Naive thymus-derived CD4-positive, alpha-beta T cell (primary cell): ENCODE measurements at regions of chr12 and their contacts with region 1.

Region 1: DNA sequence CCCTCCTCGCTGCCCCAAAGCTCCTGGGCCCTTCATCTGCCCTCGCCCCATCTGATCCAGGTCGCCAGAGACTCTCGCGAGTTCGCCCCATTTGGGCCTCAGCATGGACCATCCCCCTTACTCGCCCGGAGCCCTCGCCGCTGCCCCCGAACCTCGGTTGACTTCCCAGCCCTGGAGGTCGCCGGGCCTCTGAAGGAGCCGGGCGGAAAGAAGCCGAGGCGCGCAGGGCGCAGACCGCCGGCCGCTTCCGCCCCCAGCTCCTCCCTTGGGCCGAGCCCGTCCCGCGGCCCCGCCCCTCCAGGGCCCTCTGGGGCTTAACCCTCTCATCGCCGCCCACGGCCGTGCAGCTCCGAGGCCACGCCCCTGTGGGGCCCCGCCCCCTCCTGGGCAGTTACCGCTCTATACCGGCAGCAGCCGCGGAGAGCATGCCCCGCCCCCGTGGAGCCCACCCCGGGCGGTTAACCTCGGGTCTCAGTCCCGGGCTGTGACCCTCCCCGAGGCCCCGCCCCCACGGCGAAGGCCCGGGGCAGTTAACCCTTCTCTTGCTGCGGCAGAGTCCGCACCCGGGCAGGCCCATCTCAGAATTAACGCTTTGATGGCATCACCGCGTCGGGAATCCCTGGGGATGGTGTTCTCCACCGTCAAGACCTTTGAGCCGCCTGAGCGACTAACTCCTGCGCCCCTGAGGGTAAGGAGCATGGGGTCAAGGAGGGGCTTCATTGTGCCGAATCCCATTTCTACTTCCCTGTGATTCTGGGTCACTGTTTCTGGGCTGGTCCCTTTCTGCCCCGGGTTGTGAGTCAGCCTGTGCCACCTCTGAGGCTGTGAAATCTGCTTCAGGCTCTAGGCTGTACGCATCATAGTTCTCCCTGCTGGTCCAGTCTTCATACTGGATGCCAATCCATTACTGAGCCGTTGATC is at the start of gene SPSB2:
- DNase-seq: peak; percentile 96 to 100 (median 98)
- ATAC-seq: peak; percentile 97
- H3K4me3 ChIP-seq: peak within 1 kb of the TSS; percentile 98
- H3K4me3 Mint-ChIP-seq: peak within 1 kb of the TSS; percentile 87 to 95 (median 91)
- H3K27ac ChIP-seq: peak within 1 kb of the TSS; percentile 77
- H3K27ac Mint-ChIP-seq: peak within 1 kb of the TSS; percentile 79 to 94 (median 88)
- H3K4me1 ChIP-seq: peaks cover 32 to 34% of the 10 kb centered on the region in 2 donors
- H3K4me1 Mint-ChIP-seq: peaks cover 34 to 58% (median 47%) of the 10 kb centered on the region in 7 donors
- H3K27me3 ChIP-seq: no peaks in the 10 kb centered on the region
- H3K27me3 Mint-ChIP-seq: no peaks in the 10 kb centered on the region
- total RNA-seq, gene SPSB2: 5.1 to 20.2 (median 11.2) TPM

Region 2: GRCh38 chr12:6662906-6663742 is 210.2 kb before region 1 on chr12 and contains the start of gene ING4:
- CTCF ChIA-PET with region 1: interaction called, 3 read pairs
- POLR2A ChIA-PET with region 1: no interaction called
- intact Hi-C with region 1: loop called in 1 of 2 experiments (anchors 1 kb)
- DNase-seq: peak; percentile 79 to 99 (median 98)
- ATAC-seq: peak; percentile 99
- H3K4me3 ChIP-seq: peak within 1 kb of the TSS; percentile 92
- H3K4me3 Mint-ChIP-seq: peak within 1 kb of the TSS; percentile 92 to 99 (median 96)
- H3K27ac ChIP-seq: peak within 1 kb of the TSS; percentile 80
- H3K27ac Mint-ChIP-seq: peak within 1 kb of the TSS; percentile 91 to 99 (median 96)
- H3K4me1 ChIP-seq: peaks cover 15 to 16% of the 10 kb centered on the region in 2 donors
- H3K4me1 Mint-ChIP-seq: peaks cover 18 to 47% (median 36%) of the 10 kb centered on the region in 7 donors
- H3K27me3 ChIP-seq: no peaks in the 10 kb centered on the region
- H3K27me3 Mint-ChIP-seq: peaks cover 0 to 2% (median 0%) of the 10 kb centered on the region in 5 donors
- total RNA-seq, gene ING4: 33.1 to 101 (median 39.6) TPM

Region 3: DNA sequence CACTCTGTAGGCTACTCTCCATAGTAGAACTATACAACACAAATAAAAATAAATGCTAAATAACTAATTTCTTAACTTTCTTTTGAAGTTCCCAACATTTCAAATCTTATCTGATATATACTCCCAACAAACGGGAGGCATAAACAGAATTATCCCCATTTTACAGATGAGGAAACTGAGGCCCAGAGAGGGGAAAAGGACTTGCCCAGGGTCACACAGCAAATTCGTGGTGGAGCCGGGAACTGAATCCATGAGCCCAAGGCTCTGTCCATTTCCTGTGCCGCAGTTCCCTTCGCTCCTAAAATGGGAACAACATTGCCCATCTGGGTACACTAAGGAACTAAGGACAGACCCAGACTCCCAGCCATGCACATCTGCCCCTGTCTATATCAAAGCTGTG is 196.4 kb before region 1 on chr12:
- CTCF ChIA-PET with region 1: no interaction called
- POLR2A ChIA-PET with region 1: no interaction called
- intact Hi-C with region 1: no loop called
- DNase-seq: no peak
- ATAC-seq: no peak
- H3K4me3 ChIP-seq: no peak overlapping the region
- H3K4me3 Mint-ChIP-seq: no peak overlapping the region
- H3K27ac ChIP-seq: no peak overlapping the region
- H3K27ac Mint-ChIP-seq: no peak overlapping the region
- H3K4me1 ChIP-seq: no peaks in the 10 kb centered on the region
- H3K4me1 Mint-ChIP-seq: peaks cover 0 to 14% (median 5%) of the 10 kb centered on the region in 7 donors
- H3K27me3 ChIP-seq: no peaks in the 10 kb centered on the region
- H3K27me3 Mint-ChIP-seq: no peaks in the 10 kb centered on the region

Region 4: DNA sequence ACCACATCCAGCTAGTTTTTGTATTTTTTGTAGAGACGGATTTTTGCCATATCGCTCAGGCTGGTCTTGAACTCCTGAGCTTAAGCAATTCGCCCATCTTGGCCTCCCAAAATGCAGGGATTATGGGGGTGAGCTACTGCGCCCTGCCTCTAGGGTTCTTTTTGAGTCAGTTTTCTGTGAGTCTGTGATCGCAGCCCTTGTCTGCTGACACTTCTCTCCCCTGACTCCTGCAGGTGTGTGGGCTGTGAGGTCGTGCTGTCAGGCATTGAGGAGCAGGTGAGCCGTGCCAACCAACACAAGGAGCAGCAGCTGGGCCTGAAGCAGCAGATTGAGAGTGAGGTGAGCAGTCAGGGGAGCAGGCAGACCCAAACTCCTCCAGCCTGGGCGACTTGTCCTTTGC is 143.2 kb before region 1 on chr12:
- CTCF ChIA-PET with region 1: no interaction called
- POLR2A ChIA-PET with region 1: no interaction called
- intact Hi-C with region 1: no loop called
- DNase-seq: no peak
- ATAC-seq: no peak
- H3K4me3 ChIP-seq: no peak overlapping the region
- H3K4me3 Mint-ChIP-seq: no peak overlapping the region
- H3K27ac ChIP-seq: no peak overlapping the region
- H3K27ac Mint-ChIP-seq: no peak overlapping the region
- H3K4me1 ChIP-seq: peaks cover 1 to 3% of the 10 kb centered on the region in 2 donors
- H3K4me1 Mint-ChIP-seq: peaks cover 11 to 16% (median 13%) of the 10 kb centered on the region in 7 donors
- H3K27me3 ChIP-seq: no peaks in the 10 kb centered on the region
- H3K27me3 Mint-ChIP-seq: no peaks in the 10 kb centered on the region

Region 5: DNA sequence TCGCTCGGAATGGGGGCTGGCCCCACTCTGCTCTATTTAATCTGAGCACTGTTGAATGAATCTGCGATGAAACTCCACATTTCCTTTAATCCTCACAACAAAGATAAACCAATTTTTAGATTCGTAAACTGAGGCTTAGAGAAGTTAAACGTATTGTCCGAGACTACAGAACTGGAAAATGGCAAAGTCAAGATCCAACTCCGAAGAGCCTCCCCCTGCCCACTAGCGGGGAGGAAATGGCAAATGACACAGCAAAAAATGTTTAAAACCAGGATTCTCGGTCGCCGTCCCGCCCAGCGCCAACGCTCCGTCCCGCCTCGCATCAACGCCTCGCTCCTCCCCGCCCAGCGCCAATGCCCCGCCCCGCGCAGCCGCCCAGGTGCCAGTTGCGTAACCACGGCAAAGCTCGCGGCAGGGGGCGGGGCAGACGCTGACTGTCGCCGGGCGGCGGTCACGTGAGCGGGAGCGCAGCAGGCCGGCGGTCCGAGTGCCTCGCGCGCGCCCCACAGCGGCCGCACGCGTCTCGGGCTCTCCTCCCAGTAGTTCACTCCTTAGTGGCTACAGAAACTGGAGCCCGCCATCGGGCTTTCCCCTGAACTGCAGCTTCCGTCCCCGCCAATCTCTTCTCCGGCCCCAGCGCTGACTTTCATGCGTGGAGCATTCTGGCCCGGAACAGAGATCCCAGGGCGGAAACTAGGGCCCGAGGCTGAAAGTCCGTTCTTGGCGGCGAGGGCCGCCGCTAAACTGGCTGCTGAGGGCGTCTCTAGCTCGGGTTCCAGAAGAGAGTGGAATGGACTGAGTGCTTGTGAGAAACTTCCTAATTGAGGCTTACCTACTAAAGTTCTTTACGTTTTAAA is 17.7 kb after region 1 on chr12:
- CTCF ChIA-PET with region 1: interaction called, 21 read pairs
- POLR2A ChIA-PET with region 1: interaction called, 70 read pairs
- intact Hi-C with region 1: loop called (anchors 1 kb)
- DNase-seq: peak; percentile 95 to 100 (median 97)
- ATAC-seq: peak; percentile 96
- H3K4me3 ChIP-seq: peak overlapping the region; percentile 93
- H3K4me3 Mint-ChIP-seq: peak overlapping the region; percentile 78 to 86 (median 84)
- H3K27ac ChIP-seq: peak overlapping the region; percentile 86
- H3K27ac Mint-ChIP-seq: peak overlapping the region; percentile 82 to 94 (median 90)
- H3K4me1 ChIP-seq: peaks cover 6 to 10% of the 10 kb centered on the region in 2 donors
- H3K4me1 Mint-ChIP-seq: peaks cover 0 to 31% (median 11%) of the 10 kb centered on the region in 7 donors
- H3K27me3 ChIP-seq: no peaks in the 10 kb centered on the region
- H3K27me3 Mint-ChIP-seq: no peaks in the 10 kb centered on the region

Region 6: GRCh38 chr12:6927379-6928024 is 54.1 kb after region 1 on chr12 and contains the start of gene ATN1:
- CTCF ChIA-PET with region 1: interaction called, 15 read pairs
- POLR2A ChIA-PET with region 1: interaction called, 5 read pairs
- intact Hi-C with region 1: loop called (anchors 1 to 2 kb)
- DNase-seq: peak in 5 of 9 donors; percentile 41 to 66 (median 43)
- ATAC-seq: peak; percentile 35
- H3K4me3 ChIP-seq: peak within 1 kb of the TSS; percentile 64
- H3K4me3 Mint-ChIP-seq: peak within 1 kb of the TSS; percentile 85 to 99 (median 92)
- H3K27ac ChIP-seq: peak within 1 kb of the TSS; percentile 86
- H3K27ac Mint-ChIP-seq: peak within 1 kb of the TSS; percentile 88 to 98 (median 95)
- H3K4me1 ChIP-seq: peaks cover 16 to 37% of the 10 kb centered on the region in 2 donors
- H3K4me1 Mint-ChIP-seq: peaks cover 38 to 69% (median 56%) of the 10 kb centered on the region in 7 donors
- H3K27me3 ChIP-seq: no peaks in the 10 kb centered on the region
- H3K27me3 Mint-ChIP-seq: no peaks in the 10 kb centered on the region
- total RNA-seq, gene ATN1: 29.5 to 42.2 (median 34.4) TPM

Region 7: DNA sequence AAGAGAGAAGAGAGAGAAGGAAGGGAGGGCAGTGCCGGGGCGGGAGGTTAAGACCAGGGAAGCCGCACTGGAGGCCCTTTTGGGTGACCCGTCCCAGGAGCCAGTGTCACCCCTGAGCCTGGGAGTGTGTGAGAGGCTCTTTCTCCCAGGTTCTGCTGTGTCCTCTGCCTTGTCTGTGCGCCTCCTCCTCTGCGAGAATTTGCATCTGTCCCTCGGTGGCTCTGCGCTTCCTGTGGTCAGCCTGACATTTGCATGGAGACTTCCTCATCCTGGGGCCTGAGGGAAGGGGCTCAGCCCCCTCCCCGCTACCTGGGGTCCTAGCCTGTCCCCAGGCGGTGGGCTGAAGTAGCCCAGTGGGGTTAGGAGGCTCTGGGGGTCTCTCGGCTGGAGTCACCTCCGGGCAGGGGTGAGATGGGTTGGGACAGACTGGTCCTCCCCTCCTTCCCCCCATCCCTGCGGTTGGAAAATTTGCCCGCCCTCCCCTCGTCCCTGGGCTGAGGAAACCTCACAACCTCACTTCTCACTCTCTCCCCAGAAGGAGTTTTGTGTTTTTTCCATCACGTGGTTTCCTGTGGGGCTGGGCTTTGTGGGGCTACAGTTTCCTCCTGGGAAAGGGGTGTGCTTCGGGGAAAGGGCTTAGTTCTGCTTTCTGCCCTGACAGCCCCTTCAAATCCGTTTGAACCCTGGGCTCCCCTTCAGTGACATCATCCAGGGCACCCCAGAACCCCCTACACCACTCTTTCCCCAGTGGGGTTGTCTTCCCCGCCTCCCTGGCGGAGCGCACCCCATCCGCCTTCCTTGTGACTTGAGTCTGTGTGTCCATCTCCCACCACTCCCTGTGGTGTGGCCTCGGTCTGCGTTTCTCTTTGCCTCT is 80.3 kb after region 1 on chr12:
- CTCF ChIA-PET with region 1: interaction called, 7 read pairs
- POLR2A ChIA-PET with region 1: interaction called, 10 read pairs
- intact Hi-C with region 1: no loop called
- DNase-seq: peak in 8 of 9 donors; percentile 65 to 92 (median 74)
- ATAC-seq: peak; percentile 56
- H3K4me3 ChIP-seq: peak overlapping the region; percentile 92
- H3K4me3 Mint-ChIP-seq: peak overlapping the region; percentile 93 to 100 (median 98)
- H3K27ac ChIP-seq: peak overlapping the region; percentile 95
- H3K27ac Mint-ChIP-seq: peak overlapping the region; percentile 83 to 100 (median 97)
- H3K4me1 ChIP-seq: peaks cover 70 to 84% of the 10 kb centered on the region in 2 donors
- H3K4me1 Mint-ChIP-seq: peaks cover 54 to 85% (median 72%) of the 10 kb centered on the region in 7 donors
- H3K27me3 ChIP-seq: no peaks in the 10 kb centered on the region
- H3K27me3 Mint-ChIP-seq: no peaks in the 10 kb centered on the region

Region 8: DNA sequence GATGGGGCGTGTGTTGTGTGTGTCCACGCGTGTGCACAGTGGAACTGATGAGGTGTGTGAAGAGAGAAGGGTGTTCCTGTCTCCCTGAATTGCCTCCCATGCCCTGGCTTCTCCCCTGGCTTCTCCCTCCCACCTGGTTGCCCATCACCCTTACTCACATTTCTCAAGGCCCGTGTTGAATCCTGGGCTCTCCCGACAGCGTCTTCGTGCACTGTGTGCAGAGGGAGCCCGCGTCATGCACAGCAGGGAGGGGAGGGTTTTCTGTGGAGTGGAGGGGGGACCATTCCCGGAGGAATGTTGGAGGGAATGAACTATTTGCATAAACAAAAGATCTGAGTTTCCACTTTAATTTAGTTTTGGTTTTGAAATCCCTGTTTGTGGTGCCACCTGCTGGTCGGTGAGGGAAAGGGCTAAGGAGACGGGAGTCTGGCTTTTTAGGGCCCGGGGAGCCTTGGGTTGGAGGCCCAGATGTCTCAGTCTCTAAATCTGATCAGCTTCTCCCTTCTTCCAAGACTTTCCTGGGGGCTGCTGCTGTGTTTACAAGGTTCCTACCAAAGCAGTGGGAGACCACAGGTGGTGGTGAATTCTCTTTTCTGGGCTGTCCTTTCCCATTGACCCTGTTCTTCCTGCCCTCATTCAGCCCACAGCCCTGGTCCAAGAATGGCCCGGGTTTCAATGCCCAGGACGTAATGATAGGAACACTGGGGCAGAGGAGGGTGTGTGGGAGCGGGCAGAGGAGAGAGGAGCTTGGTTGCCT is 219.1 kb after region 1 on chr12 and contains the start of gene C1R:
- CTCF ChIA-PET with region 1: interaction called, 4 read pairs
- POLR2A ChIA-PET with region 1: no interaction called
- intact Hi-C with region 1: loop called (anchors 1 to 5 kb)
- DNase-seq: peak; percentile 46 to 71 (median 64)
- ATAC-seq: peak; percentile 81
- H3K4me3 ChIP-seq: peak within 1 kb of the TSS; percentile 66
- H3K4me3 Mint-ChIP-seq: peak within 1 kb of the TSS; percentile 76 to 91 (median 86)
- H3K27ac ChIP-seq: peak within 1 kb of the TSS; percentile 44
- H3K27ac Mint-ChIP-seq: peak within 1 kb of the TSS in 8 of 9 donors; percentile 65 to 94 (median 78)
- H3K4me1 ChIP-seq: peaks cover 7 to 8% of the 10 kb centered on the region in 2 donors
- H3K4me1 Mint-ChIP-seq: peaks cover 0 to 14% (median 9%) of the 10 kb centered on the region in 7 donors
- H3K27me3 ChIP-seq: no peaks in the 10 kb centered on the region
- H3K27me3 Mint-ChIP-seq: no peaks in the 10 kb centered on the region
- total RNA-seq, gene C1R: 1.6 to 7.2 (median 4.8) TPM

Region 9: GRCh38 chr12:7472060-7472459 is 598.7 kb after region 1 on chr12:
- CTCF ChIA-PET with region 1: no interaction called
- POLR2A ChIA-PET with region 1: no interaction called
- intact Hi-C with region 1: no loop called
- DNase-seq: no peak
- ATAC-seq: no peak
- H3K4me3 ChIP-seq: no peak overlapping the region
- H3K4me3 Mint-ChIP-seq: no peak overlapping the region
- H3K27ac ChIP-seq: no peak overlapping the region
- H3K27ac Mint-ChIP-seq: no peak overlapping the region
- H3K4me1 ChIP-seq: no peaks in the 10 kb centered on the region
- H3K4me1 Mint-ChIP-seq: no peaks in the 10 kb centered on the region
- H3K27me3 ChIP-seq: no peaks in the 10 kb centered on the region
- H3K27me3 Mint-ChIP-seq: peaks cover 6 to 19% (median 9%) of the 10 kb centered on the region in 5 donors

Region 10: GRCh38 chr12:8697476-8698131 is 1824.2 kb after region 1 on chr12 and contains the start of gene RIMKLB:
- CTCF ChIA-PET with region 1: no interaction called
- POLR2A ChIA-PET with region 1: no interaction called
- intact Hi-C with region 1: loop called in 1 of 2 experiments (anchors 5 kb)
- DNase-seq: peak; percentile 59 to 75 (median 72)
- ATAC-seq: peak; percentile 93
- H3K4me3 ChIP-seq: peak within 1 kb of the TSS; percentile 79
- H3K4me3 Mint-ChIP-seq: peak within 1 kb of the TSS; percentile 89 to 95 (median 93)
- H3K27ac ChIP-seq: peak within 1 kb of the TSS; percentile 79
- H3K27ac Mint-ChIP-seq: peak within 1 kb of the TSS; percentile 65 to 94 (median 90)
- H3K4me1 ChIP-seq: peaks cover 0 to 17% of the 10 kb centered on the region in 2 donors
- H3K4me1 Mint-ChIP-seq: peaks cover 11 to 44% (median 42%) of the 10 kb centered on the region in 7 donors
- H3K27me3 ChIP-seq: no peaks in the 10 kb centered on the region
- H3K27me3 Mint-ChIP-seq: peaks cover 0 to 64% (median 0%) of the 10 kb centered on the region in 5 donors
- total RNA-seq, gene RIMKLB: 1.8 to 31.3 (median 18.2) TPM